PC-9 (cell line): ENCODE measurements at regions of chr7 and their contacts with region 1.

Region 1: GRCh38 chr7:80047856-80048459 is 86.7 kb upstream of the GNAI1 start:
- DNase-seq: no peak
- H3K4me3 ChIP-seq: no peak overlapping the region
- H3K27ac ChIP-seq: no peak overlapping the region
- H3K4me1 ChIP-seq: no peaks in the 10 kb centered on the region
- H3K27me3 ChIP-seq: no peaks in the 10 kb centered on the region
- CTCF ChIP-seq: peak; percentile 75

Region 2: GRCh38 chr7:78510580-78511188 is 1537.3 kb before region 1 on chr7:
- CTCF ChIA-PET with region 1: no interaction called
- POLR2A ChIA-PET with region 1: no interaction called
- intact Hi-C with region 1: loop called (anchors 10 kb)
- DNase-seq: peak in 1 of 2 experiments; percentile 40
- H3K4me3 ChIP-seq: no peak overlapping the region
- H3K27ac ChIP-seq: no peak overlapping the region
- H3K4me1 ChIP-seq: no peaks in the 10 kb centered on the region
- H3K27me3 ChIP-seq: no peaks in the 10 kb centered on the region
- CTCF ChIP-seq: peak; percentile 66

Region 3: GRCh38 chr7:78587443-78588044 is 1460.4 kb before region 1 on chr7:
- CTCF ChIA-PET with region 1: no interaction called
- POLR2A ChIA-PET with region 1: no interaction called
- intact Hi-C with region 1: loop called (anchors 5 kb)
- DNase-seq: peak in 1 of 2 experiments; percentile 18
- H3K4me3 ChIP-seq: no peak overlapping the region
- H3K27ac ChIP-seq: no peak overlapping the region
- H3K4me1 ChIP-seq: no peaks in the 10 kb centered on the region
- H3K27me3 ChIP-seq: no peaks in the 10 kb centered on the region
- CTCF ChIP-seq: peak; percentile 53

Region 4: GRCh38 chr7:80210400-80210799 is 162.4 kb after region 1 on chr7:
- CTCF ChIA-PET with region 1: interaction called, 10 read pairs
- POLR2A ChIA-PET with region 1: no interaction called
- intact Hi-C with region 1: no loop called
- DNase-seq: no peak
- H3K4me3 ChIP-seq: no peak overlapping the region
- H3K27ac ChIP-seq: no peak overlapping the region
- H3K4me1 ChIP-seq: no peaks in the 10 kb centered on the region
- H3K27me3 ChIP-seq: no peaks in the 10 kb centered on the region
- CTCF ChIP-seq: no peak

Region 5: GRCh38 chr7:80346704-80347103 is 298.7 kb after region 1 on chr7:
- CTCF ChIA-PET with region 1: interaction called, 13 read pairs
- POLR2A ChIA-PET with region 1: no interaction called
- intact Hi-C with region 1: no loop called
- DNase-seq: peak in 1 of 2 experiments; percentile 90
- H3K4me3 ChIP-seq: no peak overlapping the region
- H3K27ac ChIP-seq: peak overlapping the region; percentile 36; the same call in 1 of the 2 replicates
- H3K4me1 ChIP-seq: peaks cover 18% of the 10 kb centered on the region
- H3K27me3 ChIP-seq: no peaks in the 10 kb centered on the region
- CTCF ChIP-seq: no peak